Body of pancreas (tissue), 4 donors: ENCODE measurements at regions of chr17 and their contacts with region 1.

Region 1: GRCh38 chr17:5587438-5588032 is 3.2 kb upstream of the NLRP1 start:
- DNase-seq: peak; percentile 43 to 66 (median 48)
- ATAC-seq: peak; percentile 47
- H3K4me3 ChIP-seq: no peak overlapping the region
- H3K27ac ChIP-seq: no peak overlapping the region
- H3K4me1 ChIP-seq: no peaks in the 10 kb centered on the region
- H3K27me3 ChIP-seq: no peaks in the 10 kb centered on the region
- CTCF ChIP-seq: peak; percentile 80 to 95 (median 88)
- POLR2A ChIP-seq: no peak

Region 2: GRCh38 chr17:5706577-5707216 is 119.2 kb after region 1 on chr17:
- intact Hi-C with region 1: loop called (anchors 10 kb)
- DNase-seq: peak; percentile 29 to 58 (median 46)
- ATAC-seq: no peak
- H3K4me3 ChIP-seq: no peak overlapping the region
- H3K27ac ChIP-seq: no peak overlapping the region
- H3K4me1 ChIP-seq: no peaks in the 10 kb centered on the region
- H3K27me3 ChIP-seq: no peaks in the 10 kb centered on the region
- CTCF ChIP-seq: peak; percentile 32 to 50 (median 44)
- POLR2A ChIP-seq: no peak

Region 3: GRCh38 chr17:6421700-6422604 is 834.4 kb after region 1 on chr17:
- intact Hi-C with region 1: loop called (anchors 2 kb)
- DNase-seq: peak; percentile 74 to 80 (median 78)
- ATAC-seq: peak; percentile 68
- H3K4me3 ChIP-seq: no peak overlapping the region
- H3K27ac ChIP-seq: no peak overlapping the region
- H3K4me1 ChIP-seq: no peaks in the 10 kb centered on the region
- H3K27me3 ChIP-seq: no peaks in the 10 kb centered on the region
- CTCF ChIP-seq: peak; percentile 71 to 86 (median 80)
- POLR2A ChIP-seq: no peak